GM23248 (cell line): ENCODE measurements at regions of chr3 and their contacts with region 1.

Region 1: DNA sequence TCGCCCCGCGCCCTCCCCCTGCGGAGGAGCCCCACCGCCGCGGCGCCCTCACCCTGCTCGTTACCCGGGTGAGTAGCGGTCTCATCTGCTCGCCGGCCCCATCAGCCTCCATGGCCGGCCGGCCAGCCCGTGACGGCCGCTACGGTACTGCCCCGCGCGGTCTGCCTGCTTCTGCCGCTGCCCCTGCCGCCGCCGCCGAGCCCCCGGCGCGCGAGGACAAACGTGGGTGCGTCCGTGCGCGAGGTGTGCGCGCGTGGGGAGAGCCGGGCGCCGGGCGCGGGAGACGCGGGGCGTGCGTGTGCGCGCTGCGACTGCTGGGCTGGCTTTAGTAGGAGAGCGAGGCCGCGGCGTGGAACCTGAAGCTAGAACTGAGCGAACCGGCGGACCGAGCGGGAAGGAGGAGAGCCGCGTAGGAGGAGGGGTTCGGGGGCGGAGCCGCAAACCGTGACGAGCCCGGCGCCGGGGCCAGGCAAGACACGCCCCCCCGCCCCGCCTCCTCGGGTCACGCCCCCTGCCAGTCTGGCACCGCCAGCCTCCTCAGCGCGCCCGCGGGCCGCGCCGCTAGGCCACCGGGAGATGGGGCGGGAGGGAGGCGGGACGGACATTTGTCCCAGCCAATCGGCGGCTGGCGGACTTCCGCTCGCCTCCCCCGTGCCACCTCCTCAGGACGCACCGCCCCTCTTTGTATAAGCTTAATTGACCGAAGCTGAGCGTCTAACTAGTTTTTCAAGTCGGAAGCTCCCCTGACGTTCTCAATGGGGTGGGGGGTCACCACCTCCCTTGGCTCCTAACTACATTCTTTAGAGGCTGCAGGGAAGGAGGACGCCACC is at the start of gene SLC4A7:
- DNase-seq: peak; percentile 98
- H3K4me3 ChIP-seq: peak within 1 kb of the TSS; percentile 94
- H3K27ac ChIP-seq: peak within 1 kb of the TSS; percentile 73
- H3K4me1 ChIP-seq: peaks cover 33% of the 10 kb centered on the region
- H3K27me3 ChIP-seq: no peaks in the 10 kb centered on the region
- total RNA-seq, gene SLC4A7: 73.4 and 81.6 TPM in 2 replicates

Region 2: GRCh38 chr3:27659279-27660021 is 175.2 kb after region 1 on chr3:
- in situ Hi-C with region 1: loop called (anchors 25 kb)
- DNase-seq: peak; percentile 62
- H3K4me3 ChIP-seq: no peak overlapping the region
- H3K27ac ChIP-seq: no peak overlapping the region
- H3K4me1 ChIP-seq: peaks cover 27% of the 10 kb centered on the region
- H3K27me3 ChIP-seq: no peaks in the 10 kb centered on the region

Region 3: GRCh38 chr3:27746838-27747237 is 262.6 kb after region 1 on chr3:
- in situ Hi-C with region 1: no loop called
- DNase-seq: no peak
- H3K4me3 ChIP-seq: no peak overlapping the region
- H3K27ac ChIP-seq: no peak overlapping the region
- H3K4me1 ChIP-seq: no peaks in the 10 kb centered on the region
- H3K27me3 ChIP-seq: no peaks in the 10 kb centered on the region